ENCODE measurements at regions of chr15 and their contacts with region 1.

Region 1: GRCh38 chr15:58469432-58470353 is 37.9 kb downstream of the LIPC start:
- DNase-seq: peak; percentile 86 to 97
- H3K4me3 ChIP-seq: peak overlapping the region; percentile 35; the same call in 1 of the 2 replicates
- H3K27ac ChIP-seq: peak overlapping the region; percentile 100
- H3K4me1 ChIP-seq: peaks cover 66% of the 10 kb centered on the region
- H3K27me3 ChIP-seq: no peaks in the 10 kb centered on the region
- CTCF ChIP-seq: no peak

Region 2: DNA sequence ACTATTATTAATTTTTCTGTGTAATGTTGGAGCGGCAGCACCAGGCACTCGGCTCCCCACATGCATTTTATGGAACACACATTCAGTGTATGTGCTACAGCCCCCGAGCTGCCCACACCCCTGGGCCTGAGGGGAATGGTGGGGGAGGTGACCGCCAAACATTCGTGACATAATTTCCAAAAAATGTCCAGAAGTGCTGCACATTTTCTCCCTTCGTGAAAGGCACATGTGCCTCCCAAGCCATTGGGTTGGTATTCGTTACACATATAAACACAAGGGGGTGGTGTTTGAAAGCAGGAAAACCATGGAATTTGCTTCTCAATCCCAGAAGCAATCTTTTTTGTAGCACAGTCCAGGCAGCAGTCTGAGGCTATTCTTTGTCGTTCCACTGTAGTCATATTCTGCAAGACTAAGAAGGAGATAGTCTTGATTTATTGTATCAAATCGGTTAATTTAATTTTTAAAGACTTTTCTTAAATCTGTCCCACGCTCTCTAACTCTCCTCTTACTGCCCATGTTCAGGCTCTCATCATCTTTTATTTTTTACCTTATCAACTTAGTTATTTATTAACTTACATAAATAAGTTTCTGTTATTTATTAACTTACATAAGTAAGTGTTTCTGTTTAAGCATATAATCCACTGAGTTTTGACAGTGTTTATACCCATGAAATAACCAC is 802.4 kb before region 1 on chr15:
- CTCF ChIA-PET with region 1: no interaction called
- POLR2A ChIA-PET with region 1: no interaction called
- intact Hi-C with region 1: no loop called
- DNase-seq: peak in 1 of 2 experiments; percentile 20
- H3K4me3 ChIP-seq: no peak overlapping the region
- H3K27ac ChIP-seq: no peak overlapping the region
- H3K4me1 ChIP-seq: no peaks in the 10 kb centered on the region
- H3K27me3 ChIP-seq: no peaks in the 10 kb centered on the region
- CTCF ChIP-seq: no peak

Region 3: GRCh38 chr15:58269455-58270414 is 200.0 kb before region 1 on chr15:
- CTCF ChIA-PET with region 1: no interaction called
- POLR2A ChIA-PET with region 1: interaction called, 4 read pairs
- intact Hi-C with region 1: loop called (anchors 1 kb)
- DNase-seq: peak; percentile 44 to 62
- H3K4me3 ChIP-seq: no peak overlapping the region
- H3K27ac ChIP-seq: peak overlapping the region; percentile 39
- H3K4me1 ChIP-seq: peaks cover 34% of the 10 kb centered on the region
- H3K27me3 ChIP-seq: no peaks in the 10 kb centered on the region
- CTCF ChIP-seq: peak; percentile 74

Region 4: DNA sequence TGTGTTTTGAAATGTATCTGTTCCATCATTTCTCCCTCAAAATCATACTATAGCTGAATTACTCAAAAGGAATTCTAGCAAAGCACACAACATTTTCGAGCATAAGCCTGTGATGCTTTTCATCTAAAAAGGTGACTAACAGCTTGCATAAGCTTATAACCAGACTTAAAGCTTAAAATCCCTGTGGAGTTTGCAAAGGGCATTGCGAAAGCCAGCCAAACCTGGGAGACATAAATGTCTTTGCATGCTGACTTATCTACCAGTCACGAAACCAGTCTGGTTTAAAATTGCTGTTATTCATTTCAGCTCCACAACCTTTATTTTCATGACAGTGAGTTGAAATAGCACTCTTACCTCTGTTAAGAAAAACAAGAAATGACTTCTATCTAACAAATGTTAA is 73.5 kb before region 1 on chr15:
- CTCF ChIA-PET with region 1: no interaction called
- POLR2A ChIA-PET with region 1: interaction called, 6 read pairs
- intact Hi-C with region 1: loop called (anchors 1 kb)
- DNase-seq: peak; percentile 35 to 90
- H3K4me3 ChIP-seq: no peak overlapping the region
- H3K27ac ChIP-seq: peak overlapping the region; percentile 79
- H3K4me1 ChIP-seq: peaks cover 65% of the 10 kb centered on the region
- H3K27me3 ChIP-seq: no peaks in the 10 kb centered on the region
- CTCF ChIP-seq: no peak

Region 5: GRCh38 chr15:58457381-58457965 is 12.2 kb before region 1 on chr15:
- CTCF ChIA-PET with region 1: no interaction called
- POLR2A ChIA-PET with region 1: no interaction called
- intact Hi-C with region 1: no loop called
- DNase-seq: peak; percentile 26 to 79
- H3K4me3 ChIP-seq: no peak overlapping the region
- H3K27ac ChIP-seq: peak overlapping the region; percentile 81
- H3K4me1 ChIP-seq: peaks cover 49% of the 10 kb centered on the region
- H3K27me3 ChIP-seq: no peaks in the 10 kb centered on the region
- CTCF ChIP-seq: no peak

Region 6: DNA sequence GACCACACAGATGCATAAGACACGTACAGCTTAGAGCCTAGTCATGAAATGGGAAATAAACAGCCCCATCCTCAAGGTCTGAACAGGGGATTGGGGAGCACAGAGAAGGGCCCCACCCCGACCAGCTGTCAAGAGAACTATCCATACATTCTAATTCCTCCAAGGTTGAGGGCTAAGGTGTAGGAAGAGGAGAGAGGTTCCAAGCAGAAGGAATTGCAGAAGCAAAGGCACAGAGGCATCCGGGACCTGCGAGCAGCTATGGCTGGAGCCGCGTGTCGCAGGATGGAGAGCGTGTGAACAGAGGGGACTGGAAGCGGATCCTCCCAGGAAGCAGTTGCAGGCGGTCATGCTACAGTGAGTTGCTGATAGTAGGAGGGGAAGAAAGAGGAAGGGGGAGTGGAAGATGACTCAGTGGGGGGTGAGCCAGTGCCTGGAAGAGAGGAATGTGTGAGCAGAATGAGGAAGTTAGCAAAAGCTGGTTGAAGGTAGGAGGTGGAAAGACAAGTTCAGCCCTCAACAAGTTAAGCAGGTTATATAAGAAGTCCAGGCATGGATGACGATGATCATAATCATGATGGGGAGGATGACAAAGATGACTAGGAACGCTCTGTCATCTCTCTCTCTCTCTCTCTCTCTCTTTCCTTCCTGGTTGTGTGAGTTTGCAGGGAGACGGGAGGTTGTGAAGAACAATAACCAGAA is 51.7 kb after region 1 on chr15:
- CTCF ChIA-PET with region 1: interaction called, 3 read pairs
- POLR2A ChIA-PET with region 1: interaction called, 11 read pairs
- intact Hi-C with region 1: loop called (anchors 1 kb)
- DNase-seq: peak; percentile 89 to 98
- H3K4me3 ChIP-seq: peak overlapping the region; percentile 49; the same call in 1 of the 2 replicates
- H3K27ac ChIP-seq: peak overlapping the region; percentile 97
- H3K4me1 ChIP-seq: peaks cover 50% of the 10 kb centered on the region
- H3K27me3 ChIP-seq: no peaks in the 10 kb centered on the region
- CTCF ChIP-seq: no peak

Region 7: GRCh38 chr15:58639992-58640391 is 170.3 kb after region 1 on chr15:
- CTCF ChIA-PET with region 1: no interaction called
- POLR2A ChIA-PET with region 1: no interaction called
- intact Hi-C with region 1: loop called (anchors 5 kb)
- DNase-seq: no peak
- H3K4me3 ChIP-seq: no peak overlapping the region
- H3K27ac ChIP-seq: no peak overlapping the region
- H3K4me1 ChIP-seq: no peaks in the 10 kb centered on the region
- H3K27me3 ChIP-seq: no peaks in the 10 kb centered on the region
- CTCF ChIP-seq: no peak

Region 8: GRCh38 chr15:58864602-58865424 is 395.1 kb after region 1 on chr15:
- CTCF ChIA-PET with region 1: no interaction called
- POLR2A ChIA-PET with region 1: interaction called, 8 read pairs
- intact Hi-C with region 1: loop called (anchors 5 kb)
- DNase-seq: peak; percentile 47 to 54
- H3K4me3 ChIP-seq: peak overlapping the region; percentile 58
- H3K27ac ChIP-seq: peak overlapping the region; percentile 77
- H3K4me1 ChIP-seq: no peaks in the 10 kb centered on the region
- H3K27me3 ChIP-seq: no peaks in the 10 kb centered on the region
- CTCF ChIP-seq: no peak

Measured in PC-9 (cell line).